ENCODE measurements at regions of chr14 and their contacts with region 1.

Region 1: DNA sequence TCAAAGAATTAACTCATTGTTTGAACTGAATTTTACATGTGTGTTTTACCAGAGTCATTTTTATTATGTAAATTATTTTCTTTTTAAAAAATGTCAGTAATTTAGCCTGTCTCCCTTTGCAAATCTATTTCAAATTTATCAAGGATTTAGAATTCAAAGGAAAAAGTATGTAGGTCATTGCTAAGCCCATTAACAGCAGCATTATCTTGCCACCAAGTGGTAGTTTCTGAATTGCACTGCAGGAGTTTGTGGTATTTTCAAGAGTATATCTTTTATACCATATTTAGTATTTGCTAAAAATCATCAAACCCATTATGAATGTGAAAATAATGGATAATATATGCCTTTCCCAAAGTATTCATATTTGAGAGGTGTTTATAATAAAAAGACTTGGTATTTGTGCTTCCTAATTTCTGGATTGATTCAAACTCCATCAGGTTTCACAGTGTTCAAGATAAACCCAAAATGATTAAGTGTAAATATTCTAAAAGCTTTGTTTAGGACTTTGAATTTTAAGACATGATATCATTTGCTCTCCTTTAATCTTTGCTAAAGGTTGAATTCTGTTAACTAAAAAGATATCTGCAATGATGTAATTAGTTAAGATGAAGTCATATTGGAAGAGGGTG is 711.4 kb downstream of the FSCB start:
- DNase-seq: no peak
- H3K4me3 ChIP-seq: no peak overlapping the region
- H3K27ac ChIP-seq: no peak overlapping the region
- H3K4me1 ChIP-seq: no peaks in the 10 kb centered on the region
- H3K27me3 ChIP-seq: no peaks in the 10 kb centered on the region
- CTCF ChIP-seq: peak; percentile 20 to 43

Region 2: DNA sequence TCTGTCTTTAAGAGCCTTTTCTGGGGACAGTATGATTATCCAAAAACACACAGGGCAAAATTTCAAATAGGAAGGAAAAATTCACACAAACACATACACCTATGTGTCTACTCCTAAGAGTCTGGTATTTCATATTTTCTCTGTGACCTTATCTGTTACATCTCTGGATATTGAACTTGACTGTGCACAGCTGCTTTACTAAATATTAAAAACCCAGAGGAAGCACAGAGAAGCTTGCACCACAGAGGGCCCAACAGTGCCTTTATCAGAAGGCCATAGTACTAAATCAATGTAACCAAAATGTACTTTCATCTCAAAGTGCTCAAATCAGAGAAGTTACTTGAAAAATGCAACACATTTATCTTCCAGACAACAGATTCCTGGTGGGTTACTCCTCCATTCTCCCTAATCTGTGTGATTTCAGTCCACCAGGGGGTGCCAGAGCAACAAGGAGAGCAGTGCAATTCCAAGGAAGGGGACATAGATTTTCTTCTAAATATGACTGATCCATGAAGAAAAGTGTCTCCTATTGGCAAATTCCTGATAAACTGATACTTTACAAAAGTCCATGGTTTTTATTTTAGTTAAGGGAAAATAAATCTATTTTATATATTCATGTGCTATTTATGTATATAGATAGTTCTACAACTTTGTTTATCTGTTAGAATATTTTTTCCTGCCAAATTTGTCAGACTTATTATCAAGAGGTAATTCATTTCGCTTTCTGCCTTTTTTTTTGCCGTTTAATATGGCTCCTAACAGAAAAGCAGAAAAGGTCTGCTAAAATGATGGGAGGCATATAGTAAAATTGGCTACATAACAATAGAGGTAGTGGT is 1571.4 kb before region 1 on chr14:
- CTCF ChIA-PET with region 1: no interaction called
- dilution Hi-C with region 1: no loop called
- in situ Hi-C with region 1: no loop called
- intact Hi-C with region 1: loop called (anchors 10 kb)
- DNase-seq: peak; percentile 35
- H3K4me3 ChIP-seq: no peak overlapping the region
- H3K27ac ChIP-seq: no peak overlapping the region
- H3K4me1 ChIP-seq: peaks cover 8% of the 10 kb centered on the region
- H3K27me3 ChIP-seq: no peaks in the 10 kb centered on the region
- CTCF ChIP-seq: peak; percentile 79 to 83

Region 3: DNA sequence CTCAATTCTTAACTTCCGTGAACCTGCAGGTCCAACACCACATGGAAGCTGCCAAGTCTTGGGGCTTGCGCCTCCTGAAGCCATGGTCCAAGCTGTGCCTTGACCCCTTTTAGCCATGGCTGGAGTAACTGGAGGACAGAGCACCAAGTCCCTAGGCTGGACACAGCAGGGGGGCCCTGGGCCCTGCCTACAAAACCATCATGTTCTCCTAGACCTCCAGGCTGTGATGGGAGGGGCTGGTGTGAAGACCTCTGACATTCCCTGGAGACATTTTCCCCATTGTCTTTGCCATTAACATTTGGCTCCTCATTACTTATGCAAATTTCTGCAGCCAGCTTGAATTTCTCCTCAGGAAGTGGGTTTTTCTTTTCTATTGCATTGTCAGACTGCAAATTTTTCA is 141.3 kb after region 1 on chr14:
- CTCF ChIA-PET with region 1: no interaction called
- dilution Hi-C with region 1: no loop called
- in situ Hi-C with region 1: no loop called
- intact Hi-C with region 1: no loop called
- DNase-seq: no peak
- H3K4me3 ChIP-seq: no peak overlapping the region
- H3K27ac ChIP-seq: no peak overlapping the region
- H3K4me1 ChIP-seq: no peaks in the 10 kb centered on the region
- H3K27me3 ChIP-seq: no peaks in the 10 kb centered on the region
- CTCF ChIP-seq: no peak

Region 4: DNA sequence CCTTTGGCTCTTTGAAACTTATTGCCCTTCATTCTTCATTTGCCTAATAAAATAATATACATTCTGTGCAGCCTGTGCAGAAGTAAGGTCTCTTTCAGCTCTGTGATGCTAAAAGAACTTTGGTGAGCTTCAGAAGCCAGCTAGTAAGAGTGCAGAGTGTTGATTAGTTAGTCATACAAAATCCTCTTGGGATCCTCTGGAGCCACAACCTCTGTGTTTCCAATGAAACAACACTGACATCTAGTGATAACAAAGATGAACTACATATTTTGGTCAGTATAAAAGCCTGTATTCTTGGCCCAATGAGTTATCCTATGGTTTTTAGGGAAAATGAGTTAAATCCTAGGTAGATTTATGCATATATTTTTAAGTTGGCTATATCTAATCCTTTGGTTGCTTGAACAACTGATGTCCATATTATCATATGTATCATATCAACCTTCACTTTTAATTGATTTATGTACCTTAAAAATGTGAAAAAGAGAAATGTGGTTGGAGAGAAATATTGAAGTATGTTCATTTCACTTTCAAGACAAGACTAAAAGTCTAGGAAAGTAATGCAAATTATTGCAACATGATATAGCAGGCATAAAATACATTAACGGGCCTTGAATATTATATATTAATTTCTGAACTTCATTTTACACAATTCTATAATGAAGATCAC is 1007.7 kb after region 1 on chr14:
- CTCF ChIA-PET with region 1: no interaction called
- dilution Hi-C with region 1: no loop called
- in situ Hi-C with region 1: no loop called
- intact Hi-C with region 1: loop called (anchors 10 kb)
- DNase-seq: peak; percentile 46
- H3K4me3 ChIP-seq: no peak overlapping the region
- H3K27ac ChIP-seq: no peak overlapping the region
- H3K4me1 ChIP-seq: no peaks in the 10 kb centered on the region
- H3K27me3 ChIP-seq: no peaks in the 10 kb centered on the region
- CTCF ChIP-seq: peak; percentile 45 to 71

Measured in mammary epithelial cell (primary cell).